GM10248 (cell line): ENCODE measurements at regions of chr3 and their contacts with region 1.

Region 1: DNA sequence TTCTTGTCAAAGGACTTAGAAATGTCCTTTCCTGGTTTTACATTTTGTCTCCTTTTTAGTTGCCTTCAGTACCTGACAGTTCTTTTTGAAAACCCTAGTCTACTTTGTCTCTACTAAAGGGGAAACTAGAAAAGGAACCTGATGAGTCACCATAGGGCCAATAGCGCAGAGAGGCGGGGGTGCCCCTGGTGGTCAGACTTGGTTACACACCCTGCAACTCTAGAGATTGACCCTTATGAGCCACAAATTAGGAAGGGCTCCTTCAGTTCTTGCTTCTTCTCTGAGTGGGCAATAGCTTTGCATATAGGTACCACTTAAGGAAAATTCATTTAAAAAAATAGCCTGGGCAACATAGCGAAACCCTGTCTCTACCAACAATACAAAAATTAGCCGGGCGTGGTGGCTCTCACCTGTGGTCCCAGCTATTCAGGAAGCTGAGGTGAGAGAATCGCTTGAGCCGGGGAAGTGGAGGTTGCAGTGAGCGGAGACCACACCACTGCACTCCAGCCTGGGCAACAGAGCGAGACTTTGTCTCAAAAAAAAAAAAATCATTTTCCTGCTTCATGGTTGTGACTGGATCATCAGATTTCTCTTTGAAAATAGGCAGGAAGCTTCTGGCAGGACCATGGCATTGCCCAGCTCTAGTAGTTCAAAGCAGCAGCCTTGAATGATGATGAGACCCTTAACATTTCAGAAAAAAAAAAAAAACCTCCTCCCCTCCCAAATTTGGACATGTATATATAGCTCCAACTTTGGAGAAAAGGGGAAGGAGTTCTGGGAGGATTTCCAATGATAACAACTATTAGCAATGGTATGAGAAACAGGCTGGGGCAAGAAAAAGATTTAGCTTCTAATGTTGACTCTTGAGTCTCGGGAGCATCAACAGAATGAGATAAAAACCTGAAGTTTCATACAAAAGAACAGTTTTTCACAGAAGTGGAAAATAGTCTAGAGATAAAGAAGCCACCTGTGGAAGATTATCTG is 45.2 kb upstream of the RASA2 start:
- DNase-seq: peak; percentile 85
- CTCF ChIP-seq: peak; percentile 63

Region 2: DNA sequence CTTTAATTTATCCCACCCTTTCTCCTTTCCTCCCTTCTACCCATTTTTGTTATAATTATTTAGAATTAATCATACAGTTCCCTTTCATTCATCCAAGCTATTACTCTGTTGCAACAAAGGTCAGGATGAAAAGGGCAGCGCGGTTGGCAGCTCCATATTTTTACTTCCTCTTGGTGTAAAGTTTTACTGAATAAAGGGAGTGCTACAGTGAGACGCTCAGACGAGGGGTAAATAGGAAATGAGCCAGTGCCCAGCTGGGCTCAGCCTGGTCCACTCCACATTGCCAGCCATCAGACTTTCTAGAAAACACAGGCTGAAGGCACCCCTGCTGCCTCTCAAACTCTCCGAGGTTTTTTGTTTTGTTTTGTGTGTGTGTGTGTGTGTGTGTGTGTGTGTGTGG is 95.3 kb before region 1 on chr3:
- CTCF ChIA-PET with region 1: interaction called, 13 read pairs
- POLR2A ChIA-PET with region 1: no interaction called
- DNase-seq: no peak
- CTCF ChIP-seq: no peak

Region 3: GRCh38 chr3:141370065-141370533 is 71.6 kb before region 1 on chr3:
- CTCF ChIA-PET with region 1: interaction called, 35 read pairs
- POLR2A ChIA-PET with region 1: no interaction called
- DNase-seq: peak; percentile 77
- CTCF ChIP-seq: peak; percentile 50

Region 4: GRCh38 chr3:141386611-141387111 is 55.0 kb before region 1 on chr3:
- CTCF ChIA-PET with region 1: interaction called, 19 read pairs
- POLR2A ChIA-PET with region 1: no interaction called
- DNase-seq: no peak
- CTCF ChIP-seq: no peak

Region 5: GRCh38 chr3:141402476-141403171 is 39.0 kb before region 1 on chr3:
- CTCF ChIA-PET with region 1: interaction called, 11 read pairs
- POLR2A ChIA-PET with region 1: no interaction called
- DNase-seq: peak; percentile 43
- CTCF ChIP-seq: no peak

Region 6: DNA sequence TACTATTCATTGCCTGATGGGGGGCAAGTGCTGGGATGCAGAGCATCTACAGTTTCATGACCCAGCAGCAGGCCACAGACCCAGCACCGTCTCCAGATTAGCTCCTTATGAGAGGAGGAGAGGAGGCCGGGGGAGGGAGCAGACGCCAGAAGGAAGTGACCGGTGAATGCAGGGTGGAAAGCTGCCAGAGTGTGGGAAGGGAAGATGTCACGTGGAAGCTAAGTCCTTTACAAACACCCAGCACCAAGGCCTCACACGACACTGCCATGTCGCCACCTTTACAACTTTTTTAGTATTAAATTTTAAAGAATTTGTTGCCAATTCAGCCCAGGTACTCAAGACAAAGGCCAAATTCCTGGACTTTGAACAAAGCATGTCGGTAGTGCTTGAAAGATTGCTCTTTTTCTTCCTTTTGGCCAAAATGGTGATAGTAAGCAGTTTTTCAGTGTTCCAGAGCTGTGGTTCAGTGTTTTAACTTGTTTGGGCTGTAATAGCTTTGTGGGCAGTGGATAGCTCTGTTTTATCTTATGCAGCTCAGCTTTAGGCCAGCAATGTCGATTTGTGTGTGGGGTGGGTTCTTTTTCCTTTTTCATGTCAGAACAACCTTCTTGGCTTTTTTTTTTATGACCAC is 15.2 kb before region 1 on chr3:
- CTCF ChIA-PET with region 1: interaction called, 65 read pairs
- POLR2A ChIA-PET with region 1: no interaction called
- DNase-seq: no peak
- CTCF ChIP-seq: no peak

Region 7: GRCh38 chr3:141796081-141796888 is 354.6 kb after region 1 on chr3:
- CTCF ChIA-PET with region 1: no interaction called
- POLR2A ChIA-PET with region 1: no interaction called
- DNase-seq: peak; percentile 82
- CTCF ChIP-seq: no peak